ENCODE measurements at regions of chr6 and their contacts with region 1.

Region 1: GRCh38 chr6:16286148-16286522 is 47.7 kb downstream of the GMPR start:
- DNase-seq: no peak
- ATAC-seq: no peak
- H3K4me3 Mint-ChIP-seq: no peak overlapping the region
- H3K27ac Mint-ChIP-seq: no peak overlapping the region
- H3K4me1 Mint-ChIP-seq: no peaks in the 10 kb centered on the region
- H3K27me3 Mint-ChIP-seq: no peaks in the 10 kb centered on the region
- CTCF ChIP-seq: no peak

Region 2: DNA sequence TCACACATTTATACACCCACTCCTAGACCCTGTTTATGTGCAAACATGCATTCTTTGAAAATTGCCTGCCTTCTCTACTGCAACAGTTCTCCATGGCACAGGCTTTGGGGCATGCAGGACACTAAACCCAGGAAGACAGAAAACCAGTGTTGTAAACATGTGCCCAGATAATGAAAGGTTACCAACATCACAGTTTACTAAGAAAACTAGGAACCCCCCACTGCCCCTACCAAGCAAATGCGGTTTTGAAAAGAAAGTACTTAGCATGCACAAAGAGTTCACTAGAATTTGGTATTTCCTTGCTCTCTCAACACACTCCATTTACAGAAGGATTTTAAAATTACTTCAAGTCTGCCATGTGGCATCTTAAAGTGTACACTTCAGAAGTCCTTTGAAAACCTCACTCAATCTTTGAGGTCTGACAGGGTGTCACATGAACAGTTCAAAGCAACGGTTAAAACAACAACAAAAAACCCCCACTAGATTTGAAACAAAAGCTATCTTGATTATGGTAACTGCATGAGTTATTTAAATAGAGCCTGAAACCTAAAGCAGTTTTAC is 197.3 kb after region 1 on chr6:
- CTCF ChIA-PET with region 1: no interaction called
- POLR2A ChIA-PET with region 1: no interaction called
- intact Hi-C with region 1: no loop called
- DNase-seq: no peak
- ATAC-seq: no peak
- H3K4me3 Mint-ChIP-seq: no peak overlapping the region
- H3K27ac Mint-ChIP-seq: peak overlapping the region; percentile 43
- H3K4me1 Mint-ChIP-seq: peaks cover 31% of the 10 kb centered on the region
- H3K27me3 Mint-ChIP-seq: no peaks in the 10 kb centered on the region
- CTCF ChIP-seq: no peak

Region 3: DNA sequence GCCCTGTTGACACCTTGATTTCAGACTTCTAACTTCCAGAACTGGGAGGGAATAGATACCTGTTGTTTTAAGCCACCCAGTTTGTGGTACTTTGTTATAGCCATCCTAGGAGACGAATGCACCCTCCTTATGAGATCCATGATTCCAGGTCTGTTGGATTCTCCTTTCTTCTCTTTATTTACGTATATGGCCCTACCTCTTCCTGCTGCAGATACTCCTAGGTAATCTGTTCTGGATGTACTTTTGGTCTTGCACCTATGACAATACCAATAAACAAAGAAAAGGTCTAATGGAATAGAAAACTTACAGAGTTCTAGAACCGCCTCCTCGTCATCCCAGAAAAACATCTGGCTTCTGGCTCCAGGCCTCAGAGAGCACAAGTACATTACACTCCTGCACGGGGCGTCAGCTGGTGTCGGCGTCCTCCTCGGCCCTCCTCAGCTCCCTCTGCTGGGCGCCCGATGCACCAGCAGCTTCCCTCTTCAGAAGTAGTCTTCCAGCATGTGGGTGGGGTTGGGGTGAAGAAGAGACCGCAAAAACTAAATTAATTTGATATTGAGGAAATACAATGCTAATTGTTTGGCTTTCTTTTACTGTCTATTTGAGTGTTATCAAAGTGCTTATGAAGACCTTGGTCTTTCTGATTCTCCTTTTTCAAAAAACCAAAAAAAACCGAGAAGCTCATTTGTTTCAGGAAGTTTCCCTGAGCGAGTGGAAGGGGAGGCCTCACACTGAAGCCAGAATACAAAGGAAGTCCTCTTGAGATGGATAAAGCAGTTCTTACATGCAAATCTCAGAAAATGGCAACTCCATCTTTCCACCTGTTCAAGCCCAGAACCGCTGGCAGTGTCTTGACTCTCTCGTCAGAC is 484.8 kb after region 1 on chr6:
- CTCF ChIA-PET with region 1: interaction called, 6 read pairs
- POLR2A ChIA-PET with region 1: no interaction called
- intact Hi-C with region 1: loop called (anchors 1 kb)
- DNase-seq: peak; percentile 59
- ATAC-seq: peak; percentile 97
- H3K4me3 Mint-ChIP-seq: peak overlapping the region; percentile 32
- H3K27ac Mint-ChIP-seq: no peak overlapping the region
- H3K4me1 Mint-ChIP-seq: peaks cover 16% of the 10 kb centered on the region
- H3K27me3 Mint-ChIP-seq: peaks cover 3% of the 10 kb centered on the region
- CTCF ChIP-seq: peak; percentile 81

Region 4: GRCh38 chr6:17086469-17086868 is 800.3 kb after region 1 on chr6:
- CTCF ChIA-PET with region 1: no interaction called
- POLR2A ChIA-PET with region 1: no interaction called
- intact Hi-C with region 1: loop called (anchors 5 kb)
- DNase-seq: no peak
- ATAC-seq: no peak
- H3K4me3 Mint-ChIP-seq: no peak overlapping the region
- H3K27ac Mint-ChIP-seq: no peak overlapping the region
- H3K4me1 Mint-ChIP-seq: no peaks in the 10 kb centered on the region
- H3K27me3 Mint-ChIP-seq: peaks cover 3% of the 10 kb centered on the region
- CTCF ChIP-seq: no peak